Uterus (tissue), 4 donors: ENCODE measurements at regions of chr21 and their contacts with region 1.

Region 1: DNA sequence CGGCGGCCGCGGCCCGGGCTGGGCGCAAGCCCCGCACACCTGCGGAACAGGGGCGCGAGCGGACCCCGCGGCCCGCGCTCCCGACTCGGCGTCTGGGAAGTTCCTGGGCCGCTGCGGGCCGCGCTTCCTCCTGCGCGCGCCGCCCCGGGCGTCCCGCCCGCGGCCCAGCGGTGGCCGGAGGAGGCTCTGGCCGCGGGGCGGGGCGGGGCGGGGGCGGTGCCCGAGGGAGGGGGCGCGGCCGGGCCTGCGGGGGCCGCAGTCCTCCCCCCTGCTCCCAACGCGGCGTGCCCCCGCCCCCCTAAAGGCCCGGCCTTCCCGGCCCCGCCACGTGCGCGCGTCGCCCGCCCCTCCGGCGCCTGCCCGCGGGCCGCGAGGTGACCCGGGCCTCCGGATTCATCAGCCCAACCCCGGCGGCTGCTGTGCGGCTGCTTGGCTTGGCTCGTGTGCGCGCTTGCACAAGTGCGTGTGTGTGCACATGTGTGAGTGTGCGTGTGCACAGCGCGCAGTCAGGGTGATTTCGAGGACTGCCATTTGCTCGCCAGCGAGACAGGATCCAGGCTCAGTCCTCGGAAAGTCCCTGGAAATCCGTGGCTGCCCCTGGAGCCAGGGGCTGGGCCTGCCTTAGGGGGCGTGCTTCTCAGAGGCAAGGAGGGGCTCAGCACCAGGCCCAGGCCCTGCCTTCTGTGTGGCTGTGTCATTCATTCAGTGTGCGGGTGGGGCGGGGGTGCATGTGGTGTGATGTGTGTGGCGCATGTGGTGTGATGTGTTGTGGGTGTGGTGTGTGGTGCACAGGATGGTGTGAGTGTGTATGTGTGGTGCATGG is at the start of gene C2CD2:
- DNase-seq: peak; percentile 66 to 75
- H3K4me3 ChIP-seq: peak within 1 kb of the TSS; percentile 21 to 72
- H3K27ac ChIP-seq: peak within 1 kb of the TSS; percentile 81
- H3K4me1 ChIP-seq: peaks cover 0 to 3% of the 10 kb centered on the region in 2 donors
- H3K27me3 ChIP-seq: no peaks in the 10 kb centered on the region
- CTCF ChIP-seq: no peak
- POLR2A ChIP-seq: peak; percentile 46 to 69
- total RNA-seq, gene C2CD2: 9.5 to 37.5 (median 18.3) TPM

Region 2: DNA sequence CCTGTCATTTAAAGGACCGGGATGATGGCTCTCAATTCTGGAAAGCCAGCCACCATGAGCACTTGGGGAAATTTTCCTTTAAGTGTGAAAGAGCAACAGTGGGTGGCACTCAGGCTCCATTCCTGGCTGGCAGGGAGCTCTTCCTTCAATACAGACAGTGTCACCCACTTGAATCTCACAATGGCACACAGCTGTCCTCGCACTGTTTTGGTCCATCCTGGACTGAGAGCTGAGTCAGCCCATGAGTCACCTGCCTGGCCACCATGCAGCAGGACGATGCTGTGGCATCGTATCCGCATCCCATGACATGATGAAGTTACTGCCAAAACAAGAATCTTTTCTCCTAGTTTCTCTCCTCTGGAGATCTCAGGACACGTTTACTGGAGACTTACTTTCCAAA is 452.2 kb before region 1 on chr21:
- intact Hi-C with region 1: no loop called
- DNase-seq: no peak
- H3K4me3 ChIP-seq: no peak overlapping the region
- H3K27ac ChIP-seq: no peak overlapping the region
- H3K4me1 ChIP-seq: no peaks in the 10 kb centered on the region
- H3K27me3 ChIP-seq: no peaks in the 10 kb centered on the region
- CTCF ChIP-seq: no peak
- POLR2A ChIP-seq: no peak

Region 3: GRCh38 chr21:41879190-41879998 is 74.6 kb before region 1 on chr21 and contains the start of gene PRDM15:
- intact Hi-C with region 1: loop called (anchors 5 kb)
- DNase-seq: peak; percentile 80 to 81
- H3K4me3 ChIP-seq: peak within 1 kb of the TSS; percentile 72 to 89
- H3K27ac ChIP-seq: peak within 1 kb of the TSS; percentile 86 to 94
- H3K4me1 ChIP-seq: peaks cover 0 to 8% of the 10 kb centered on the region in 2 donors
- H3K27me3 ChIP-seq: no peaks in the 10 kb centered on the region
- CTCF ChIP-seq: no peak
- POLR2A ChIP-seq: peak in 1 of 2 donors; percentile 28
- total RNA-seq, gene PRDM15: 5.9 to 11.0 (median 6.5) TPM

Region 4: DNA sequence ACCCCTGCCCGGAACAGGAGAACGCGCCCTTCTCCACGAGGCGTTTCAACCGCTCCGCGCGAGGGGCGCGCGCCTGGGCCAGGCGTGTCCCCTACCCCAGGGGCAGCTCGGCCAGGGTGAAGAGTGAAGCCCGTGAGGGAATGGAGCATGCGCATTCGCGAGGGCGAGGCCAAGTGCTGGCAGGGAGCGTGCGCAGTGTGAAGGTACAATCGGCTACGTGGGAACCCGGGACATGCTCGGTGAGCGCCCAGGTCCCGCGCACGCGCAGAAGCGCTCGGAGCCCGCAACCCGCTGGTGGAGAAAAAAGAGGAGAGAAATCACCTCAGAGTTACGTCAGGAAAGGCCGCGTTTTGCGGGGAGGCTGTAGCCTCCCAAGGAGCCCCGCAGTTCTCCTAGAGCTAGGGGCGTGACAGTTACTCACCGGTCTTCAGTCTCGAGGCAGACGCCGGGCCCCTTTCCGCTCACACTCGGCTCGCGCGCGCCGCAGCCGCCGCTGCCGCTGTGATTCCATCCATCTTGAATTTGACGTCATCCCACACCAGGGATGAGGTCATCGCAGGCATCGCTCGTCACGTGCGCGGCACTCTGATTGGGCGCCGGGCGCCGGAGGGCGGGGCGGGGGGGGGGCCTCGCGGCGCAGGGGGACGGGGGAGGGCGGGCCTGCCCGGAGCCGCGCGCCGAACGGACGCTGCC is 55.9 kb after region 1 on chr21 and contains the start of gene ZBTB21:
- intact Hi-C with region 1: loop called (anchors 10 kb)
- DNase-seq: peak; percentile 99
- H3K4me3 ChIP-seq: peak within 1 kb of the TSS; percentile 73 to 85
- H3K27ac ChIP-seq: peak within 1 kb of the TSS; percentile 99
- H3K4me1 ChIP-seq: peaks cover 0 to 3% of the 10 kb centered on the region in 2 donors
- H3K27me3 ChIP-seq: no peaks in the 10 kb centered on the region
- CTCF ChIP-seq: no peak
- POLR2A ChIP-seq: peak; percentile 91 to 96
- total RNA-seq, gene ZBTB21: 2.8 to 29.9 (median 14.4) TPM